ENCODE measurements at regions of chr11 and their contacts with region 1.

Region 1: GRCh38 chr11:57456960-57457642 is 3.2 kb upstream of the RTN4RL2 start:
- DNase-seq: peak; percentile 82
- ATAC-seq: peak; percentile 57
- H3K4me3 Mint-ChIP-seq: no peak overlapping the region
- H3K27ac Mint-ChIP-seq: no peak overlapping the region
- H3K4me1 Mint-ChIP-seq: peaks cover 24% of the 10 kb centered on the region
- H3K27me3 Mint-ChIP-seq: peaks cover 44% of the 10 kb centered on the region

Region 2: GRCh38 chr11:57357856-57358255 is 99.2 kb before region 1 on chr11:
- CTCF ChIA-PET with region 1: interaction called, 15 read pairs
- DNase-seq: no peak
- ATAC-seq: no peak
- H3K4me3 Mint-ChIP-seq: no peak overlapping the region
- H3K27ac Mint-ChIP-seq: no peak overlapping the region
- H3K4me1 Mint-ChIP-seq: no peaks in the 10 kb centered on the region
- H3K27me3 Mint-ChIP-seq: peaks cover 26% of the 10 kb centered on the region

Region 3: DNA sequence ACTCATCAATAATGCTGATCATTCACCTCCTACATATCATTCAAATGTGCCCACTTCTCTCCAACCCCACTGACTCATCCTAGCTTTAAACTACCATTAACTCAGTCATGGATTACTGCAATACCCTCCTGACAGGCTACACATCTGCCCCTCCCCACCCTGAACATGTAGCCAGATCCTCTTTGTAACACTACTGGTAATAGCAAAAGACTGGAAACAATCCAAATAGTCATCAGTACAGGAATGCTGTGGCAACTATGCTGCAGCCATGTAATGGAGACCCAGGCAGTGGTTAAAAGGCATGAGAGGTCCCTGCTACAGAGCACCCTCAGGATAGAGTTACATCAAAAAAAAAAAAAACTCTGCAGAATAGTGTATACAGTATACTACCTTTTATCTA is 46.8 kb before region 1 on chr11:
- CTCF ChIA-PET with region 1: no interaction called
- DNase-seq: no peak
- ATAC-seq: no peak
- H3K4me3 Mint-ChIP-seq: no peak overlapping the region
- H3K27ac Mint-ChIP-seq: no peak overlapping the region
- H3K4me1 Mint-ChIP-seq: peaks cover 50% of the 10 kb centered on the region
- H3K27me3 Mint-ChIP-seq: no peaks in the 10 kb centered on the region

Region 4: GRCh38 chr11:57444362-57445121 is 12.6 kb before region 1 on chr11:
- CTCF ChIA-PET with region 1: interaction called, 33 read pairs
- DNase-seq: no peak
- ATAC-seq: no peak
- H3K4me3 Mint-ChIP-seq: no peak overlapping the region
- H3K27ac Mint-ChIP-seq: no peak overlapping the region
- H3K4me1 Mint-ChIP-seq: no peaks in the 10 kb centered on the region
- H3K27me3 Mint-ChIP-seq: peaks cover 23% of the 10 kb centered on the region

Region 5: DNA sequence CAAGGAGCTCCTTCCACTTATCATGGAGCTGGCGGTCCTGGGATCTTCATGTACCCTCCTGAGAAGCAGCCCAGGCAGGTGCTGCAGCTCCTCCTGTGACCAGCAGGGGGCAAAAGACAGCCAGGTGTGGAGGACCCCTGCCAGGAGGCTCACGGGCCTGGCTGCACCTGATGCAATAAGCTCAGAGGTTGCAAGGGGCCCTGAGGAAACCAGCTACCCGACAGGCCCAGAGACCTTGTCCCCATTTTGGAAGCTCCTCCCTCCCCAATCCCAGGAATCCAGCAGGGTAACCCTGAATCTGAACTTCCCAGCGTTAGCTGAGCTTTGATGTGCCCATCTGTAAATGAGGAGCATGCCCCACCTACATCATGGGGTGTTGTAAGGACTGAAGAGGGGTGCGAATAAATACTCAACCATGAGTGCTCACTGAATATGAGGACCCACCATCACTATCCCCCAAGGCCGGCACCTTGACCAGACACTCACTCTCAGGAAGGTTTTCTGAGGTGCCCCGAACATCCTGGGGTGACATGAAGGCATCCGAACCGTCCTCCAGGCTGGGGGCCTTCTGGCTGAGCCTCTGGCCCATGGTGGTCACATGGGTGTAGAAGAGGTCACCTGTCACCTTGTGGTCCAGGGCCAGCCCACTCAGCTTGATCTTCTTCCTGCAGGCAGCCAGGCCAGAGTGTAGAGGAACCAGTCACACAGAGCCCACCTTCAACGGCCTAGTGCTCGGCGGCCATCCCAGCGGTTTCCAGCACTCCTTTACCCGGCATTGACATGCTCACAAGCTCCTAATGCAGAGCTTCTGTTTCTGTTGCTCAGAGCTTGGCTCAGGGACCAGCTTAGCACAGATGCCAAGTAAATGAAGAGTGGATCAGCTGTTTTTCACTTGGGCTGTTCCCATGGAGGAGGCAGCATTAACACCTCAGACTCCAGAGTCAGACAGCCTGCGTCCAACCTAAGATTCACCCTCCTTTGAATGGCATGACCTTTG is 36.7 kb after region 1 on chr11:
- CTCF ChIA-PET with region 1: interaction called, 98 read pairs
- DNase-seq: peak; percentile 81
- ATAC-seq: peak; percentile 84
- H3K4me3 Mint-ChIP-seq: no peak overlapping the region
- H3K27ac Mint-ChIP-seq: peak overlapping the region; percentile 55
- H3K4me1 Mint-ChIP-seq: peaks cover 10% of the 10 kb centered on the region
- H3K27me3 Mint-ChIP-seq: no peaks in the 10 kb centered on the region

Region 6: DNA sequence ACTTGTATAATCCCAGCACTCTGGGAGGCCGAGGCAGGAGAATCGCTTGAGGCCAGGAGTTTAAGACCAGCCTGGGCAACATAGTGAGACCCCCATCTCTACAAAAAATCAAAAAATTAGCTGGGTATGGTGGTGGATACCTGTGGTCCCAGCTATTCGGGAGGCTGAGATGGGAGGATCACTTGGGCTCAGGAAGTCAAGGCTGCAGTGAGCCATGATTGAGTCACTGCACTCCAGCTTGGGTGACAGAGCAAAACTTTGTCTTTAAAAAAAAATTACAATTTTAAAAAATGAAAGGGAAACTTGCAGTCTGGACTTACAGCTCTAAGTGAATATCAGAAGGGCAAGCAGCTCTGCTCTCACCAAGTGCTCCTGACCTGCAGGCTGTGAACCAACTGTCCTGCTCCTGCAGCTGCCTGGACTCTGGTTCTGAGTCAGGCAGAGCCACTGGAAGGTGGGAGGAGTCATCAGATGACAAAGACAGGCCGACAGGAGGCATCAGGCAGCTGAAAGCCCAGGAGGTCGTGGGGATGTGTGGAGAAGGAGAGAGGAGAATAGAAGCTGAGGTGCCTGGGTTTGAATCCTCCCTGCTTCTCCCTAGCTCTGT is 89.9 kb after region 1 on chr11:
- CTCF ChIA-PET with region 1: interaction called, 17 read pairs
- DNase-seq: no peak
- ATAC-seq: peak; percentile 61
- H3K4me3 Mint-ChIP-seq: no peak overlapping the region
- H3K27ac Mint-ChIP-seq: peak overlapping the region; percentile 22
- H3K4me1 Mint-ChIP-seq: peaks cover 20% of the 10 kb centered on the region
- H3K27me3 Mint-ChIP-seq: no peaks in the 10 kb centered on the region

Region 7: DNA sequence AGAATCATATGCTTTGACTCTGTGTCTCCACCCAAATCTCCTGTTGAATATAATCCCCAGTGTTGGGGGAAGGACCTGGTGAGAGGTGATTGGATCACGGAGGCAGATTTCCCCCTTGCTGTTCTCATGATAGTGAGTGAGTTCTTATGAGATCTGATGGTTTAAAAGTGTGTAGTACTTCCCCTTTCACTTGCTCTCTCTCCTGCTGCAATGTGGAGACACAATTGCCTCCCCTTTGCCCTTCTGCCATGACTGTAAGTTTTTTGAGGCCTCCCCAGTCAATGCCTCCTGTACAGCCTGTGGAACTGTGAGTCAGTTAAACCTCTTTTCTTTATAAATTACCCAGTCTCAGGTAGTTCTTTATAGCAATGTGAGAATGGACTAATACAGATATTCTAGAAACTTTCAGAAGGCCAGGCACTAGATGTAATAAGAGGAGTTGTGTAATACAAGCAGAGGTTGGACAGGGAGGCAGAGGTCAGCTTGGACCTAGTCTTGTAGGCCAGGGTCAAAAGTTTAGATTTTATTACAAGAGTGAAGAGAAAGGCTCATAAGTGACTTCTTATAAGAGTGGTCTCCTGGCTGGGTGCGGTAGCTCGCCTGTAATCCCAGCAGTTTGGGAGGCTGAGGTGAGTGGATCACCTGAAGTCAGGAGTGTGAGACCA is 131.1 kb after region 1 on chr11:
- CTCF ChIA-PET with region 1: no interaction called
- DNase-seq: no peak
- ATAC-seq: no peak
- H3K4me3 Mint-ChIP-seq: no peak overlapping the region
- H3K27ac Mint-ChIP-seq: no peak overlapping the region
- H3K4me1 Mint-ChIP-seq: no peaks in the 10 kb centered on the region
- H3K27me3 Mint-ChIP-seq: peaks cover 8% of the 10 kb centered on the region

Region 8: GRCh38 chr11:57614234-57614772 is 157.2 kb after region 1 on chr11:
- CTCF ChIA-PET with region 1: no interaction called
- DNase-seq: no peak
- ATAC-seq: no peak
- H3K4me3 Mint-ChIP-seq: no peak overlapping the region
- H3K27ac Mint-ChIP-seq: no peak overlapping the region
- H3K4me1 Mint-ChIP-seq: no peaks in the 10 kb centered on the region
- H3K27me3 Mint-ChIP-seq: peaks cover 39% of the 10 kb centered on the region

Measured in activated CD8-positive, alpha-beta memory T cell treated with anti-CD3 and anti-CD28 coated beads, Interleukin-2, amount 10 ng/mL, durations not matched to agents 7 days and 5 days (primary cell).